Panc1 (cell line): ENCODE measurements at regions of chr7 and their contacts with region 1.

Region 1: DNA sequence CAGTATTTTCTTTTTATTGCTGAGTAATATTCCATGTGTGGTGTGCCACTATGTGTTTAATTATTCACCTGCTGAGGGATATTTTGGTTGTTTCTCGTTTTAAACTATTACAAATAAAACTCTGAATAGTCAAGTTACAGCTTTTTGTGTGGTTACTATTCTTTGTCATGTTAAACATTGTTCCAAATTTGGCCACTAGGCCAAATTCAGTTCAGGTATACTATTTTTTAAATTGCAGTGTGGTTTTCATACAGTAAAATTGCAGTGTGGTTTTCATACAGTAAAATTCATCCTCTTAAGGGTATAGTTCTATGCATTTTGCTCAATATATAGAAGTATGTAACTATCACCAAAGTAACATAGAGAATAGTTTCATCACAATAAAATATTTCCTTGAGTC is 97.4 kb upstream of the FAM3C start:
- DNase-seq: no peak
- ATAC-seq: no peak
- H3K4me3 ChIP-seq: no peak overlapping the region
- H3K27ac ChIP-seq: no peak overlapping the region
- H3K4me1 ChIP-seq: no peaks in the 10 kb centered on the region
- H3K27me3 ChIP-seq: no peaks in the 10 kb centered on the region
- CTCF ChIP-seq: no peak; the same call in 1 of the 2 replicates

Region 2: GRCh38 chr7:121447243-121447910 is 46.2 kb before region 1 on chr7:
- CTCF ChIA-PET with region 1: no interaction called
- POLR2A ChIA-PET with region 1: no interaction called
- in situ Hi-C with region 1: no loop called
- intact Hi-C with region 1: no loop called
- DNase-seq: no peak
- ATAC-seq: no peak
- H3K4me3 ChIP-seq: no peak overlapping the region
- H3K27ac ChIP-seq: no peak overlapping the region
- H3K4me1 ChIP-seq: no peaks in the 10 kb centered on the region
- H3K27me3 ChIP-seq: no peaks in the 10 kb centered on the region
- CTCF ChIP-seq: no peak

Region 3: GRCh38 chr7:121459148-121459547 is 34.4 kb before region 1 on chr7:
- CTCF ChIA-PET with region 1: no interaction called
- POLR2A ChIA-PET with region 1: no interaction called
- in situ Hi-C with region 1: no loop called
- intact Hi-C with region 1: loop called (anchors 1 kb)
- DNase-seq: no peak
- ATAC-seq: no peak
- H3K4me3 ChIP-seq: no peak overlapping the region
- H3K27ac ChIP-seq: no peak overlapping the region
- H3K4me1 ChIP-seq: no peaks in the 10 kb centered on the region
- H3K27me3 ChIP-seq: no peaks in the 10 kb centered on the region
- CTCF ChIP-seq: no peak